ENCODE measurements at regions of chr10 and their contacts with region 1.

Region 1: DNA sequence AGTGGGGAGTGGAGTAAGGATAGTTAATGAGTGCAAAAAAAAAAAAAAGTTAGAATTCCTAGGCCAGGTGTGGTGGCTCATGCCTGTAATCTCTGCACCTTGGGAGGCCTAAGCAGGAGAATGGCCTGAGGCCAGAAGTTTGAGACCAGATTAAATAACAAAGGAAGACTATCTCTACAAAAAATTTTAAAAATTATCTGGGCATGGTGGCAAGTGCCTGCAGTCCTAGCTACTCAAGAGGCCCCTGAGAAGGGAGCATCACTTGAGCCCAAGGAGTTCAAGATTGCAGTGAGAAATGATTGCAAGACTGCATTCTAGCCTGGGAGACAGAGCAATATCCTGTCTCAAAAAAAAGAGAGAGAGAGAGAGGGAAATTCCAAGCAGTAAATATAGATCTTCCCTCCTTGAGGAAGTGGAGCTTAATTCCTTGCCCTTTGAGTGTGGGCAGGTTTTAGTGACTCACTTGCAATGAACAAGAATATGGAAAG is 19.5 kb upstream of the CSTF2T start:
- DNase-seq: no peak
- H3K4me3 ChIP-seq: no peak overlapping the region
- H3K27ac ChIP-seq: no peak overlapping the region
- H3K4me1 ChIP-seq: no peaks in the 10 kb centered on the region
- H3K27me3 ChIP-seq: no peaks in the 10 kb centered on the region
- CTCF ChIP-seq: no peak
- POLR2A ChIP-seq: no peak

Region 2: GRCh38 chr10:51527522-51528219 is 191.2 kb before region 1 on chr10:
- intact Hi-C with region 1: loop called (anchors 5 kb)
- DNase-seq: no peak
- H3K4me3 ChIP-seq: peak overlapping the region in 2 of 3 donors; percentile 19 to 42
- H3K27ac ChIP-seq: peak overlapping the region; percentile 23 to 50
- H3K4me1 ChIP-seq: no peaks in the 10 kb centered on the region
- H3K27me3 ChIP-seq: no peaks in the 10 kb centered on the region
- CTCF ChIP-seq: no peak
- POLR2A ChIP-seq: no peak

Region 3: GRCh38 chr10:51675088-51675487 is 43.8 kb before region 1 on chr10:
- intact Hi-C with region 1: no loop called
- DNase-seq: no peak
- H3K4me3 ChIP-seq: no peak overlapping the region
- H3K27ac ChIP-seq: no peak overlapping the region
- H3K4me1 ChIP-seq: no peaks in the 10 kb centered on the region
- H3K27me3 ChIP-seq: no peaks in the 10 kb centered on the region
- CTCF ChIP-seq: no peak
- POLR2A ChIP-seq: no peak